Activated CD4-positive, alpha-beta memory T cell treated with anti-CD3 and anti-CD28 coated beads for 36 hours (primary cell): ENCODE measurements at regions of chr3 and their contacts with region 1.

Region 1: DNA sequence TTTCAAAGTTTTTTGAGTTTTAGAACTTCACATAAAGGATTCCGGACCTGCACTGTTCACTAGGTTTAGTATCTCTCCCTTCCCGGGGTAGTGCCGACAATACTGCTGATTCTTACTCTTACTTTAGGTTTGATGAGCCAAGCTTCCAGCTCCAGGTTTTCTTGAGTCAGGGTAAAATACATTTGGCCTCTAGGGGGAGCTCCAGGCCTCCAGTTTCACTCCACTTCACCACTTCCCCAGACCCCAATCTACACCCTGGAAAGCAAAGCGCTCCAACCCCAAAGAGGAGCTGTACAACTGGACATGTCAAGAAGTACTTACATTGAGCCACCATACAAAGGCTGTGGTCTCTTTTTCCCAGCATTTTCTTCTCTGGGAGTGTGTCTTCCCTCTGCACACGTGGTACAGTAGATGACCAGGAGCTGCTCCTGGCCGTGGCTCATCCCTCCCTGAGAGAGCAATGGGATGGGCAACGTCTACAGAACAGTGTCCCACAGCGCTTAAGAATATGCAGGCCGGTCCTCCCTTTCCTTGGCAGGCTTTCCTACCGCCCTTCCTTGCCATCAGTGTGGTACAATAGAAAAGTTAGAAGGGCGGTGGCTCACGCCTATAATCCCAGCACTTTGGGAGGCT is 93.9 kb upstream of the CCDC80 start:
- DNase-seq: peak; percentile 73
- H3K4me3 Mint-ChIP-seq: no peak overlapping the region
- H3K27ac Mint-ChIP-seq: no peak overlapping the region
- H3K4me1 Mint-ChIP-seq: peaks cover 42% of the 10 kb centered on the region
- H3K27me3 Mint-ChIP-seq: no peaks in the 10 kb centered on the region

Region 2: DNA sequence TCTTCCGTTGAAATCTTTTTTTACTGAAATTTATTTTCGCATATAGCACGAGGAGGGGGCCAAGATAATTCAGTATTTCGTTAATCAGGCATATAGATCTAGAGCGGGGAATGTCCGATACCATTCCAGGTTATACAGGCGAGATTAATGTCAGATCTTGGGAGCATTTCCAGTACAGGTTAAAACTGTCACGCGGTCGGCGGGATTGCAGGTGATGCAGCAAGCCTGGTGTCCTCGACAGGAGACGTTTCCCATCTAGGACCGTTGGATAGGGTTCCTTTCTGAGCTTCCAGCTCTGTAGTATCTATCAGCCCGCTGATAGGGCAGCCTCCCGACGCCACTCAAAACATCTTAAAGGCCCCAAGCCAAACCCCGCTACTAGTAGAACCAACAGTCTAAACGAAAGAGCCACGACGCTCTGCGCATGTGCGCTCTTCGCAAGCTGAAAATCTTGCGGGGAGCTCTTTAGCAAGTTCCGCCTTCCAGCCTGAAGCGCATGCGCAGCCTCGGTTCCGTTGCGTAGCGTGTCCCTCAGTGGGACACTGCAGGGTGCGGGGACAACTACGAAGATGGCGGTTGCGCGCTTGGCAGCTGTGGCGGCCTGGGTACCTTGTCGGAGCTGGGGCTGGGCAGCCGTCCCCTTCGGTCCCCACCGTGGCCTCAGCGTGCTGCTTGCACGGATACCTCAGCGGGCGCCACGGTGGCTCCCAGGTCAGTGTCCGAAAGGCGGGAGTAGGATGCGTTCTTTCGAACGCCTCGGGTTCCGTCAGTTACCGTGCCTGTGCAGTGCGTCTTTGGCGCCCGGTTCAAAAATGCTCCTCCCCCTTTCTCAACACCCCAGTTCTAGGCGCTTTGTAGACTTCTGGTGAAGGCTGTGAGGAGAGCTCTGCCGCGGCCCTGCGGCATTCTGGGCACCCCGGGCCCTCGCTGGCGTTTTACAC is 756.1 kb before region 1 on chr3 and contains the start of gene ABHD10:
- CTCF ChIA-PET with region 1: no interaction called
- POLR2A ChIA-PET with region 1: no interaction called
- intact Hi-C with region 1: no loop called
- DNase-seq: peak; percentile 98
- H3K4me3 Mint-ChIP-seq: peak within 1 kb of the TSS; percentile 90
- H3K27ac Mint-ChIP-seq: peak within 1 kb of the TSS; percentile 91
- H3K4me1 Mint-ChIP-seq: peaks cover 37% of the 10 kb centered on the region
- H3K27me3 Mint-ChIP-seq: no peaks in the 10 kb centered on the region
- total RNA-seq, gene ABHD10: 79.8 to 84.2 TPM

Region 3: DNA sequence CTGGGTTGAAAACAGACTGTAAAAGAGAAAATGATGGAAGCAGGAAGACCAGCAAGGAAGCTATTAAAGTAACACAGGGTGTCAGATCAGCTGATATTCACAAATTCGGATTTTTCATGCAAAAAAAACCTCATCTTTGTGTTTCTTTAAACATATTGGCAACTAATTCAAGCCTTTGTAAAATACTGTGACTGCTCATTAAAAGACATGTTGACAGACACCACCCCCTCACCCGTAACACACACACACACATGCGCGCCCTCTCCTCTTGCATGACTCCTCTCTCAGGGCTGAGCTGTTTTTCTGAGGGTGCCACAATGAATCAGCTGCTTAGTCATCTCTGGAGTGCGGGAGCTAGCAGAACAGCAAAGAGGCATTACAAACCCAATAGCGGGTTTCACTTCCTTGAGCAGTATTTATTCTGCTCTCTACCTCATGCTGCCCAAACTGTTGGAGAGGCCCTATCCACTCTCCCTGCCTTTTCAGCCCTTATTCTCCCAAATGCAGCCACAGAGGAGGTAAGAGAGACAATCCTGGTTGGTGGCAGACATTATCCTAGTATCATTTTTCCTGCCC is 58.1 kb before region 1 on chr3:
- CTCF ChIA-PET with region 1: interaction called, 5 read pairs
- POLR2A ChIA-PET with region 1: interaction called, 3 read pairs
- intact Hi-C with region 1: loop called (anchors 2 kb)
- DNase-seq: peak; percentile 96
- H3K4me3 Mint-ChIP-seq: peak overlapping the region; percentile 14
- H3K27ac Mint-ChIP-seq: peak overlapping the region; percentile 14
- H3K4me1 Mint-ChIP-seq: peaks cover 52% of the 10 kb centered on the region
- H3K27me3 Mint-ChIP-seq: peaks cover 14% of the 10 kb centered on the region

Region 4: GRCh38 chr3:112773864-112774590 is 39.2 kb after region 1 on chr3:
- CTCF ChIA-PET with region 1: interaction called, 12 read pairs
- POLR2A ChIA-PET with region 1: no interaction called
- intact Hi-C with region 1: loop called (anchors 1 kb)
- DNase-seq: peak; percentile 64
- H3K4me3 Mint-ChIP-seq: no peak overlapping the region
- H3K27ac Mint-ChIP-seq: peak overlapping the region; percentile 61
- H3K4me1 Mint-ChIP-seq: peaks cover 63% of the 10 kb centered on the region
- H3K27me3 Mint-ChIP-seq: no peaks in the 10 kb centered on the region

Region 5: DNA sequence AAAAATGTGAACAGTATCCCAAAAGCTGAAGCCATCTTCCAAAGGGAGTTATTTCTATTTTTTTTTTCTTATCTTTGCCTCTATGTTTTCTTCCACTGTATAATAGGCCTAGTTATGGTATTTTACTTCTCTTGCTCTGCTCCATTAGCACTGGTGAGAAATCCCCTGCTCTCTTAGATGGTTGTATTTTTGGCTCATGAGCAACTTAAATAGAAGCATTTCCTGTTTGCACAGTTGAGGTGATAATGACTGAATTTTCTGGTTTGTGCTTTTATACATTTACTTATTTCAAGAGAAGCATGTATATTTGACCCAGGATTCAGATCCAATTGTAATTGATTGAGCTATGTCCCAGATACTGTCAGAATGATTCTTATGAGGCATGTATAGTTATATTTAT is 173.4 kb after region 1 on chr3:
- CTCF ChIA-PET with region 1: interaction called, 11 read pairs
- POLR2A ChIA-PET with region 1: no interaction called
- intact Hi-C with region 1: no loop called
- DNase-seq: no peak
- H3K4me3 Mint-ChIP-seq: no peak overlapping the region
- H3K27ac Mint-ChIP-seq: no peak overlapping the region
- H3K4me1 Mint-ChIP-seq: peaks cover 16% of the 10 kb centered on the region
- H3K27me3 Mint-ChIP-seq: no peaks in the 10 kb centered on the region

Region 6: GRCh38 chr3:112973325-112974177 is 238.7 kb after region 1 on chr3:
- CTCF ChIA-PET with region 1: interaction called, 156 read pairs
- POLR2A ChIA-PET with region 1: interaction called, 11 read pairs
- intact Hi-C with region 1: loop called (anchors 1 kb)
- DNase-seq: peak; percentile 72
- H3K4me3 Mint-ChIP-seq: peak overlapping the region; percentile 82
- H3K27ac Mint-ChIP-seq: peak overlapping the region; percentile 85
- H3K4me1 Mint-ChIP-seq: peaks cover 87% of the 10 kb centered on the region
- H3K27me3 Mint-ChIP-seq: no peaks in the 10 kb centered on the region

Region 7: DNA sequence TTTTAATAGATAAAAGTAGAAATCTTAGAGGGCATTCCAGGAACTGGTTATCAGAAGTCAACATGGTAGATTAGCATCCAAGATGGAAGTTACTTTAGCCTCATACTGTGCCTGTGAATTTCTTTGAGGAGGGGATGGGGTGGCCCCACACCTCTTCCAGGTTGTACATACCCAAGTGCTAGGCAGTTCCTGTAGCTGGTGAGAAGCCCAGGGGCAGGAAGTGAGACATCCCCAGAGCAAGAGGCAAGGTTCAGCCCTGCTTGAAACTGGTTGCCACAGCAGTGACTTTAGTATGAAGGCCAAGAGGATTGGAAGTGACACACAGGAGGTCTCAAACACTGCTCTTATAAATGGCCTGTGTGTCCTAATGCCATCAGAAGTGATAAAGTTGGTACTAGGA is 267.8 kb after region 1 on chr3:
- CTCF ChIA-PET with region 1: interaction called, 13 read pairs
- POLR2A ChIA-PET with region 1: no interaction called
- intact Hi-C with region 1: no loop called
- DNase-seq: peak; percentile 81
- H3K4me3 Mint-ChIP-seq: no peak overlapping the region
- H3K27ac Mint-ChIP-seq: peak overlapping the region; percentile 84
- H3K4me1 Mint-ChIP-seq: peaks cover 68% of the 10 kb centered on the region
- H3K27me3 Mint-ChIP-seq: no peaks in the 10 kb centered on the region

Region 8: DNA sequence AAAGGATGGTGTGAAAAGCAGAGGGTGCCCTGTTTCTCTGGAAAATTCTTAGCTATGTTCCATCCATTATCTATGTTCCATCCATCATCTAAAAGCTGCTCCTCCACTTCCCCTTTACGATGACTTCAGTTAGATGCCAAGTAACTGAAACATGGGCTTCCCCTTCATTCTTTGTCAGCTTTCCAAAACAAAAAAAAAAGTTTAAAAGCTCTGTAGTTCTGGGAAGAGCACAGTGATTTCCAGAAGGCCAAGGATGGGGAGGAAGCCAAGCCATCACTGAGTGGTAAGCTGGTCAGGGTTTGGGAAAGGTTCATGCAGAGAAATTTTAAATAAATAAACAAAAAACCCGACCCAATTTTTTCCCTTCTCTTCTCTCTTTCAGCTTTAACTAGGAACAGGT is 594.9 kb after region 1 on chr3:
- CTCF ChIA-PET with region 1: no interaction called
- POLR2A ChIA-PET with region 1: no interaction called
- intact Hi-C with region 1: no loop called
- DNase-seq: no peak
- H3K4me3 Mint-ChIP-seq: no peak overlapping the region
- H3K27ac Mint-ChIP-seq: no peak overlapping the region
- H3K4me1 Mint-ChIP-seq: no peaks in the 10 kb centered on the region
- H3K27me3 Mint-ChIP-seq: no peaks in the 10 kb centered on the region